ENCODE measurements at regions of chr3 and their contacts with region 1.

Region 1: GRCh38 chr3:8501371-8502131 is at the start of gene LMCD1:
- DNase-seq: peak; percentile 92 to 99 (median 97)

Region 2: GRCh38 chr3:8307545-8308110 is 193.9 kb before region 1 on chr3:
- intact Hi-C with region 1: no loop called
- DNase-seq: peak in 21 of 42 donors; percentile 7 to 74 (median 32)

Region 3: DNA sequence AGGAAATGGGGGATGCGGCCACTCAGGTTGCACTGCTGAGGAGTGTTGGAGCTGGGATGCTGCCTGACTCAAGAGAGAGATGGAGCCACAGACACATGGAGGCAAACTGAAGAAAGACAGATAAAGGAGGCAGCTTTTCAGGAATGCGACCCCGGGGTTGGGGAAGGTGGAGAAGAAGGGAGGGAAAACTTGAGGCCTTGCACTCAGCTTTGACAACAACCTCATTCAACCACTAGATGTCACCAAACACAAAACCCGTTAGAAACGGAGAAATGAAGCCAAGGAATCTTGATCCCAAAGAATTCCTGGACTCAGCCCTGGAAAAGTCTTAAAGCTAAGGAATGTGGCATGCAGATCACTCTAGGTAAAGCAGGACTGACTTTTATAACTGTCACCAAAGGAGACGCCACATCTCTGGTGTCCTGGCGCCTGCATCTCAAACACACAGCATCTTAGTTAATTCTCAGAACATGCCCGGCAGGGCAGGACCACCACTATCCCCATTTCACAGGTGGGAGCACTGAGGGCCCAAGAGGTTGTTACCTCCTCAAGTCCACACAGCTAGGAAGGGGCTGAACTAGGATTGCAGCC is 59.5 kb before region 1 on chr3:
- intact Hi-C with region 1: loop called (anchors 10 kb)
- DNase-seq: peak in 18 of 42 donors; percentile 14 to 70 (median 33)

Region 4: DNA sequence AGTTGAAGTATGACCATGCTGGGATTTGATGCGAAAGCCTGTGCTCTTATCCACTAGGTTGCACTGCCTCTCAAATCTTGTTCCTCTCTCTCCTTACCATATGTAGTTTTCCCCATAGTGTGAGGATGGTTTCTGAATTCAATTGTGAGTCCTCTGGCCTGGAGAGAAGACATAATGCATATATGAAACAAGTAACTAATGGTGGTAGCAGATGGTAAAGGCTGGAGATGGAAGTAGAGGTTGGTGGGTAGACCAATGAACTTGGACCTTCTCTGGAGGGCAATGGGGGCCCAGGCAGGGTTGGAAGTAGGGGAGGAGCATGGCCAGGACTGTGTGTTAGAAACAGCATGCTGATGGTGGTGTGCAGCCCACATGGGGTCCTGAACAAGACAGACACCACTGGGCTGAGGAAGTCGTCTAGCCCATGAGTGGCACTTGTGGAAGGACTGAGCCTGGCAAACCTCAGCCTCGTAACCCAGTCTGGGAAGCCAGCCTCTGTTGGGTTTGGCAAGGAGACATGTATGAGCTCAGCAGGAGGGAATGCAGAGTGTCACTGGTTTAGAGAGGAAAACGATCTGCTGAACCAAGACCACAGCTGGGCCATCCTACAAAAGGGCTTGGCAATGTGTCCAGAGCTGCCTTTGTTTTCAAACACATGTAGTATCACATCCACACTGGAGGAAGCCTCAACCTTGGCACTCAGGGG is 18.4 kb before region 1 on chr3:
- intact Hi-C with region 1: loop called (anchors 2 kb)
- DNase-seq: peak; percentile 7 to 92 (median 72)